ENCODE measurements at regions of chr15 and their contacts with region 1.

Region 1: DNA sequence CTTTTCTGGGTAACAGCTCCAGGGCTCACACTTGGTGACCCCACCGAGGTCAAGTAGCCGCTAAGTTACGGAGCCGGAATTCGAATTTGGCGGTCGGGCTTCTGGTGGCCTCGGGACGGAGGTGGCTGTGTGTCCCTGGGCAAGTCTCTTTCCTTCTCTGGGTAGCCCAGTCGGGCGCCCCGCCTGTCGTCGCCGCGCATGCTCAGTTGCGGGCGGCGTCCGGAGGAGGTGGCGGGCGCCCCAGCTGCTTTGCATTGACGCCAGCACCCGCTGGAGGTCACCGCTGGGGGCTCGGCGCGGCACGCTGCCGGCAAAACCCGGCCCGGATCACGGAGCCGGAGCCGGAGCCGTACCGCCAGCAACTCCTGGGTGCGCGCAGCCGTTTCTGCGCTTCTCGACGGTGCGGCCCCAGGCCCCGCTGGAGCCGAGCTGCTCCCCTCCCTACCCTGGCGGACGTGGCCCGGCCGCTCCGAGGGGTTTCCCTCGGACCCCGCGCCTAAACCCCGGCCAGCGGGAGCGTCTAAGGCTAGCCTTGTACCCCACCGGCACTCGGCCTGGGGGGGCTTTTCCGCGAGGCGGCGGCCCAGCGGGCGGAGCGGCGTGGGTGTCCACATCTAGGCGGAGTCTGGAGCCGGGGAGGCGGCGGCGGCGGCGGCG is 474 bp upstream of the PDE8A start:
- DNase-seq: peak; percentile 97
- ATAC-seq: peak; percentile 80
- H3K4me3 Mint-ChIP-seq: peak overlapping the region; percentile 84
- H3K27ac Mint-ChIP-seq: peak overlapping the region; percentile 89
- H3K4me1 Mint-ChIP-seq: peaks cover 43% of the 10 kb centered on the region
- H3K27me3 Mint-ChIP-seq: no peaks in the 10 kb centered on the region

Region 2: GRCh38 chr15:84633311-84634227 is 347.6 kb before region 1 on chr15:
- CTCF ChIA-PET with region 1: interaction called, 4 read pairs
- POLR2A ChIA-PET with region 1: interaction called, 4 read pairs
- intact Hi-C with region 1: loop called in 1 of 2 experiments (anchors 1 kb)
- DNase-seq: peak; percentile 87
- ATAC-seq: peak; percentile 57
- H3K4me3 Mint-ChIP-seq: peak overlapping the region; percentile 93
- H3K27ac Mint-ChIP-seq: peak overlapping the region; percentile 99
- H3K4me1 Mint-ChIP-seq: peaks cover 45% of the 10 kb centered on the region
- H3K27me3 Mint-ChIP-seq: no peaks in the 10 kb centered on the region

Region 3: DNA sequence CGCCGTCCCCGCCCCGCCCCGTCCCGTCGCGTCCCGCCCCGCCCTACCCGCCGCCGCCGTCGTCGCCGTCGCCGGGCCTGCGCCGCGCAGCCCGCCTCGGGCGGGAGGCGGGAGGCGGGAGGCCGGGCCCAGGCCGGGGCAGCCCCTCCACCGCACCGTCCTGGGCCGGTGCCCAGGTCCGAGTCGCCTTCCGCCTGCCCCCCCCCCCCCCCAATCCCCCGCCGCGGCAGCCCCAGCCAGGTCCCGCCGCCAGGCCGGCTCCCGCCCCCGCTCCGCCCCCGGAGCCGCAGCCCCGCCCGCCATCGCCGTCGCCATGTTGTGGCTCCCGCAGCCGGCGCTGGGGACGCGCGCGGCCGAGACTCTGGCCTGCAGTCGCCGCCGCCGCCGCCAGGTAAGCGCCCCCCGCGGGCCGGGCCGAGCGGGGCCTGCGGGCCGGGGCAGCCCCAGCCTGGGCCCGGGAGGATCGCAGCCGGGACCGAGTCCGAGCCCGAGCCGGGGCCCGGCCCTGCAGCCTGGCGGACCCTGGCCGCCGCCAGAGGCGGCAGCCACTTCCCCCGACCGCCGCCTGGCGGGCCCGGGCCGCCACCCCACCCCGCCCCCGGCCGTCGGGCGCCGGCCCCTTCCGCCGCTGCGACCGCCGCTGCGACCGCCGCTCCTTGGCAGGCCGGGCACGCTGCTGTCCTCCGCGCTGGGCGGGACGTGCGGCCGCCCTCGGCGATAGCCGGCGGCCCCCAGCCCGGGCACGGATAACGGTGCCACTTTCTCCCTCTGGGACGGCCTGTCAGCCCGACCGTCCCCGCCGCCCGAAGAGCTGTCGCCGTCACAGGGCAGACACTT is 232.7 kb before region 1 on chr15 and contains the start of gene ZNF592:
- CTCF ChIA-PET with region 1: no interaction called
- POLR2A ChIA-PET with region 1: no interaction called
- intact Hi-C with region 1: loop called in 1 of 2 experiments (anchors 1 kb)
- DNase-seq: peak; percentile 86
- ATAC-seq: peak; percentile 55
- H3K4me3 Mint-ChIP-seq: peak within 1 kb of the TSS; percentile 94
- H3K27ac Mint-ChIP-seq: peak within 1 kb of the TSS; percentile 97
- H3K4me1 Mint-ChIP-seq: peaks cover 59% of the 10 kb centered on the region
- H3K27me3 Mint-ChIP-seq: no peaks in the 10 kb centered on the region
- total RNA-seq, gene ZNF592: 25.5 to 30.8 TPM

Region 4: GRCh38 chr15:85010386-85011159 is 29.4 kb after region 1 on chr15:
- CTCF ChIA-PET with region 1: no interaction called
- POLR2A ChIA-PET with region 1: no interaction called
- intact Hi-C with region 1: no loop called
- DNase-seq: no peak
- ATAC-seq: no peak
- H3K4me3 Mint-ChIP-seq: no peak overlapping the region
- H3K27ac Mint-ChIP-seq: no peak overlapping the region
- H3K4me1 Mint-ChIP-seq: peaks cover 28% of the 10 kb centered on the region
- H3K27me3 Mint-ChIP-seq: no peaks in the 10 kb centered on the region

Region 5: GRCh38 chr15:85044251-85044853 is 63.2 kb after region 1 on chr15:
- CTCF ChIA-PET with region 1: interaction called, 3 read pairs
- POLR2A ChIA-PET with region 1: no interaction called
- intact Hi-C with region 1: loop called (anchors 1 to 2 kb)
- DNase-seq: peak; percentile 68
- ATAC-seq: peak; percentile 57
- H3K4me3 Mint-ChIP-seq: no peak overlapping the region
- H3K27ac Mint-ChIP-seq: no peak overlapping the region
- H3K4me1 Mint-ChIP-seq: peaks cover 13% of the 10 kb centered on the region
- H3K27me3 Mint-ChIP-seq: no peaks in the 10 kb centered on the region

Region 6: GRCh38 chr15:85380217-85380811 is 399.1 kb after region 1 on chr15 and contains the start of gene AKAP13:
- CTCF ChIA-PET with region 1: no interaction called
- POLR2A ChIA-PET with region 1: no interaction called
- intact Hi-C with region 1: loop called in 1 of 2 experiments (anchors 10 kb)
- DNase-seq: peak; percentile 97
- ATAC-seq: peak; percentile 90
- H3K4me3 Mint-ChIP-seq: peak within 1 kb of the TSS; percentile 72
- H3K27ac Mint-ChIP-seq: peak within 1 kb of the TSS; percentile 92
- H3K4me1 Mint-ChIP-seq: peaks cover 50% of the 10 kb centered on the region
- H3K27me3 Mint-ChIP-seq: no peaks in the 10 kb centered on the region
- total RNA-seq, gene AKAP13: 85.1 to 104 TPM